CD8-positive, alpha-beta memory T cell (primary cell): ENCODE measurements at regions of chr12 and their contacts with region 1.

Region 1: DNA sequence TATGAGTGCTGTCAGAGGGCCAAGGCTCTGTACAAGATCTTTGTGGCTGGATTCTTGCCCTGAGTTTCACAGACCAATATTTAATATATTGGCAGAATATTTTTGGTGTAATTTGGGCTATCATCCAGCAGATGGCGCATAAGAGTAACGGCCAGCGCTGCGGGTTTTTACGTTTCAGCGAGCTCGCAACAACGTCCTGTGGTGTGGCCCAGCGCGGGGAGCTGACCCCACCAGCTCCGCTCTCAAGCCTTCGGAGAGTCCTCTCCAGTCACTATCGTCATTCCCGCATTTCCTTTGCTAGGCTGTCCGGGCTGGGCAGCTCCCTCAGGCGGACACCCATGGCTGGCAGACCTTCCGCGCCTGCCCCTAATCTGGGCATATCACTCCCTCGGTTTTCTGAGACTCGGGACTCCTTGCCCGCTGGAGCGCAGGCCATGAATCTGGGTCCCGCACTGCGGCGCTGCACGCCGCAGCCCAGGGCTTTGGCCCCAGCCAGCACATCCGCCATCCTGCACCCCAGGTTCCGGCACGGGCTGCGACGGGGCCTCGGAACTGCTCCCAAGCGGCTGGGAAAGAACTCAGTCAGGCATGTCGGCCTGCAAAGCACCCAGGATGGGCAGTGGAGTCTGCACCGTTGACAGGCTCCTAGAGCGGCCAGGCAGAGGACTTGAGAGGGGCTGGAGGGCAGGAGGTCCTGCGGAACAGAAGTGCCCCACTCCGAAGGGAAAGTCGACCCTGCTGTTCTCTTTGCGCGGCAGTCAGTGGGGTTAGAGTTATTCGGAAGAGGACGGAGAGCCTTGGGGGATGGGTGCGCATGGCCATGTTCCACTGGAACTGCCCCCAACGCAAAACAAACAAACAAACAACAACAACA is 18.4 kb downstream of the OLR1 start:
- DNase-seq: peak; percentile 24 to 68 (median 56)
- H3K4me3 ChIP-seq: peak overlapping the region; percentile 96
- H3K4me3 Mint-ChIP-seq: peak overlapping the region; percentile 89 to 96 (median 93)
- H3K27ac ChIP-seq: peak overlapping the region; percentile 41
- H3K27ac Mint-ChIP-seq: peak overlapping the region in 7 of 8 donors; percentile 53 to 95 (median 82)
- H3K4me1 ChIP-seq: no peaks in the 10 kb centered on the region
- H3K4me1 Mint-ChIP-seq: peaks cover 12 to 15% (median 14%) of the 10 kb centered on the region in 3 donors
- H3K27me3 ChIP-seq: no peaks in the 10 kb centered on the region
- H3K27me3 Mint-ChIP-seq: peaks cover 0 to 5% of the 10 kb centered on the region in 2 donors

Region 2: GRCh38 chr12:10140001-10140400 is 13.5 kb before region 1 on chr12:
- CTCF ChIA-PET with region 1: interaction called, 17 read pairs
- POLR2A ChIA-PET with region 1: no interaction called
- DNase-seq: peak in 3 of 5 donors; percentile 12 to 41 (median 35)
- H3K4me3 ChIP-seq: no peak overlapping the region
- H3K4me3 Mint-ChIP-seq: no peak overlapping the region
- H3K27ac ChIP-seq: no peak overlapping the region
- H3K27ac Mint-ChIP-seq: no peak overlapping the region
- H3K4me1 ChIP-seq: no peaks in the 10 kb centered on the region
- H3K4me1 Mint-ChIP-seq: no peaks in the 10 kb centered on the region
- H3K27me3 ChIP-seq: no peaks in the 10 kb centered on the region
- H3K27me3 Mint-ChIP-seq: peaks cover 0 to 20% of the 10 kb centered on the region in 2 donors

Region 3: GRCh38 chr12:10190558-10191388 is 37.3 kb after region 1 on chr12:
- CTCF ChIA-PET with region 1: interaction called, 40 read pairs
- POLR2A ChIA-PET with region 1: interaction called, 5 read pairs
- DNase-seq: peak; percentile 28 to 72 (median 48)
- H3K4me3 ChIP-seq: no peak overlapping the region
- H3K4me3 Mint-ChIP-seq: no peak overlapping the region
- H3K27ac ChIP-seq: no peak overlapping the region
- H3K27ac Mint-ChIP-seq: peak overlapping the region in 2 of 8 donors; percentile 2 to 5
- H3K4me1 ChIP-seq: no peaks in the 10 kb centered on the region
- H3K4me1 Mint-ChIP-seq: peaks cover 4 to 8% (median 5%) of the 10 kb centered on the region in 3 donors
- H3K27me3 ChIP-seq: no peaks in the 10 kb centered on the region
- H3K27me3 Mint-ChIP-seq: peaks cover 16 to 22% of the 10 kb centered on the region in 2 donors

Region 4: GRCh38 chr12:10673660-10674384 is 520.3 kb after region 1 on chr12 and contains the start of gene STYK1:
- CTCF ChIA-PET with region 1: interaction called, 11 read pairs
- POLR2A ChIA-PET with region 1: no interaction called
- DNase-seq: peak; percentile 70 to 85 (median 77)
- H3K4me3 ChIP-seq: peak within 1 kb of the TSS; percentile 57
- H3K4me3 Mint-ChIP-seq: peak within 1 kb of the TSS; percentile 84 to 95 (median 90)
- H3K27ac ChIP-seq: peak within 1 kb of the TSS; percentile 87
- H3K27ac Mint-ChIP-seq: peak within 1 kb of the TSS; percentile 90 to 97 (median 96)
- H3K4me1 ChIP-seq: peaks cover 35% of the 10 kb centered on the region
- H3K4me1 Mint-ChIP-seq: peaks cover 44 to 54% (median 53%) of the 10 kb centered on the region in 3 donors
- H3K27me3 ChIP-seq: no peaks in the 10 kb centered on the region
- H3K27me3 Mint-ChIP-seq: peaks cover 2 to 3% of the 10 kb centered on the region in 2 donors
- total RNA-seq, gene STYK1: 2.0 to 2.1 TPM

Region 5: GRCh38 chr12:11397366-11397765 is 1243.9 kb after region 1 on chr12:
- CTCF ChIA-PET with region 1: no interaction called
- POLR2A ChIA-PET with region 1: no interaction called
- DNase-seq: no peak
- H3K4me3 ChIP-seq: no peak overlapping the region
- H3K4me3 Mint-ChIP-seq: no peak overlapping the region
- H3K27ac ChIP-seq: no peak overlapping the region
- H3K27ac Mint-ChIP-seq: no peak overlapping the region
- H3K4me1 ChIP-seq: no peaks in the 10 kb centered on the region
- H3K4me1 Mint-ChIP-seq: no peaks in the 10 kb centered on the region
- H3K27me3 ChIP-seq: no peaks in the 10 kb centered on the region
- H3K27me3 Mint-ChIP-seq: peaks cover 0 to 7% of the 10 kb centered on the region in 2 donors